Posterior vena cava (tissue), 2 donors: ENCODE measurements at regions of chr11 and their contacts with region 1.

Region 1: GRCh38 chr11:70894566-70895365 is 357.6 kb downstream of the SHANK2 start:
- DNase-seq: peak; percentile 74

Region 2: DNA sequence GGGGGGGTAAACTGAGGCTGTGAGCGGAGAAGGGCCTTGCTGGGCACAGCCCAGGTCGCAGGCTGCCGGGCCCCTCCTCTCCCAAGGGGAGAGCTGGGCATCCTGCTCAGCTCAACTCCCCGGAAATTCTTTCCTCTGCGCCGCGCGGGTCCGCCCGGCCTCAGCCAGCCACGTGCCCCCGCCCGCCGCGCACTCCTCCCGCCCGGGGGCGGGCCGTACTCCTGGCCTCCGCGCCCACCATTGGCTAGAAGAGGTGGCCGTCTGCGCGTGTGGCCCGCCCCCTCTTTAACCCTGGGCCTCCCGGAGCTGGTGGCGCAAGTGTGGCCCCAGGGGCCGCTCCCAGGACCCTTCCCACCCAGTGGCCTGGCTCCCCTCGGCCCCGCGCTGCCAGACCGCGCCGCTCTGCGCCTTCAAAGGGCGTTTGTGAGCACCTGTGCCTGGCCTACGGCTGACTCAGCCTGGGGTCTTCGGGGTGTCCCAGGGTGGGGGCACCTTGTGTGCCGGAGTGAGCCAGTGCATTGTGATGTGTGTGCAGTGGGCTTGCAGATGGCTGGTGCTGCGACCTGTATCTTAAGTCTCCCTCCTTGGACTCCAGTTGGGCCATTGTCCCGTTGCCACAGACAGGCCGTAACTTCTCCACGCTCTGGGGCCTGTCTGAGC is 1883.7 kb before region 1 on chr11:
- intact Hi-C with region 1: loop called in 1 of 2 experiments (anchors 10 kb)
- DNase-seq: peak; percentile 93

Region 3: GRCh38 chr11:70942593-70942992 is 47.8 kb after region 1 on chr11:
- intact Hi-C with region 1: no loop called
- DNase-seq: no peak